Activated CD4-positive, alpha-beta memory T cell treated with anti-CD3 and anti-CD28 coated beads for 36 hours (primary cell): ENCODE measurements at regions of chr22 and their contacts with region 1.

Region 1: GRCh38 chr22:30245985-30246901 is at the start of gene LIF:
- DNase-seq: peak; percentile 69
- H3K4me3 Mint-ChIP-seq: peak within 1 kb of the TSS; percentile 90
- H3K27ac Mint-ChIP-seq: peak within 1 kb of the TSS; percentile 94
- H3K4me1 Mint-ChIP-seq: peaks cover 73% of the 10 kb centered on the region
- H3K27me3 Mint-ChIP-seq: no peaks in the 10 kb centered on the region
- total RNA-seq, gene LIF: 176 to 189 TPM

Region 2: DNA sequence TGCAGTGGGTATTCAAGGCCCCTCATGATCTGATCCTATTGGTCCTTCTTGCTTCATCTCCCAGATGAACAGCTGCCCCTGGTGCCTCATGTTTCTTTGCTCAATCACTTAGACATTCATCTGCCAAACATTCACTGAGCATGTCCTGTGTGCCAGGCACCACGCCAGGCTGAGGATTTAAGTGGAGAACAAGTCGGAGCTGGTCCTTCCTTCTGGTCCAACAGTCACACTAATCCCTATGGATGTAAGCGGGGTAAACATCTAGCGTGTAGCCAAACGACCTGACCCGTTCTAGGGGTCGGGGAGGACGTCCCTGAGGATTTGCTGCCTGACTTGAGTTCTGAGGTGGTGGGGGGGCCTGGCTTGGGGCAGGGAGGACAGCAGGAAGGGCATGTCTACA is 501.3 kb before region 1 on chr22:
- CTCF ChIA-PET with region 1: no interaction called
- POLR2A ChIA-PET with region 1: no interaction called
- intact Hi-C with region 1: no loop called
- DNase-seq: no peak
- H3K4me3 Mint-ChIP-seq: no peak overlapping the region
- H3K27ac Mint-ChIP-seq: no peak overlapping the region
- H3K4me1 Mint-ChIP-seq: no peaks in the 10 kb centered on the region
- H3K27me3 Mint-ChIP-seq: no peaks in the 10 kb centered on the region

Region 3: GRCh38 chr22:30089655-30089974 is 156.6 kb before region 1 on chr22:
- CTCF ChIA-PET with region 1: no interaction called
- POLR2A ChIA-PET with region 1: no interaction called
- intact Hi-C with region 1: no loop called
- DNase-seq: no peak
- H3K4me3 Mint-ChIP-seq: no peak overlapping the region
- H3K27ac Mint-ChIP-seq: no peak overlapping the region
- H3K4me1 Mint-ChIP-seq: peaks cover 7% of the 10 kb centered on the region
- H3K27me3 Mint-ChIP-seq: no peaks in the 10 kb centered on the region

Region 4: GRCh38 chr22:30169002-30169401 is 77.2 kb before region 1 on chr22:
- CTCF ChIA-PET with region 1: no interaction called
- POLR2A ChIA-PET with region 1: interaction called, 3 read pairs
- intact Hi-C with region 1: loop called (anchors 1 kb)
- DNase-seq: no peak
- H3K4me3 Mint-ChIP-seq: no peak overlapping the region
- H3K27ac Mint-ChIP-seq: no peak overlapping the region
- H3K4me1 Mint-ChIP-seq: peaks cover 9% of the 10 kb centered on the region
- H3K27me3 Mint-ChIP-seq: peaks cover 2% of the 10 kb centered on the region

Region 5: GRCh38 chr22:30178181-30179126 is 67.8 kb before region 1 on chr22:
- CTCF ChIA-PET with region 1: interaction called, 10 read pairs
- POLR2A ChIA-PET with region 1: interaction called, 6 read pairs
- intact Hi-C with region 1: no loop called
- DNase-seq: peak; percentile 73
- H3K4me3 Mint-ChIP-seq: no peak overlapping the region
- H3K27ac Mint-ChIP-seq: peak overlapping the region; percentile 94
- H3K4me1 Mint-ChIP-seq: peaks cover 69% of the 10 kb centered on the region
- H3K27me3 Mint-ChIP-seq: no peaks in the 10 kb centered on the region

Region 6: DNA sequence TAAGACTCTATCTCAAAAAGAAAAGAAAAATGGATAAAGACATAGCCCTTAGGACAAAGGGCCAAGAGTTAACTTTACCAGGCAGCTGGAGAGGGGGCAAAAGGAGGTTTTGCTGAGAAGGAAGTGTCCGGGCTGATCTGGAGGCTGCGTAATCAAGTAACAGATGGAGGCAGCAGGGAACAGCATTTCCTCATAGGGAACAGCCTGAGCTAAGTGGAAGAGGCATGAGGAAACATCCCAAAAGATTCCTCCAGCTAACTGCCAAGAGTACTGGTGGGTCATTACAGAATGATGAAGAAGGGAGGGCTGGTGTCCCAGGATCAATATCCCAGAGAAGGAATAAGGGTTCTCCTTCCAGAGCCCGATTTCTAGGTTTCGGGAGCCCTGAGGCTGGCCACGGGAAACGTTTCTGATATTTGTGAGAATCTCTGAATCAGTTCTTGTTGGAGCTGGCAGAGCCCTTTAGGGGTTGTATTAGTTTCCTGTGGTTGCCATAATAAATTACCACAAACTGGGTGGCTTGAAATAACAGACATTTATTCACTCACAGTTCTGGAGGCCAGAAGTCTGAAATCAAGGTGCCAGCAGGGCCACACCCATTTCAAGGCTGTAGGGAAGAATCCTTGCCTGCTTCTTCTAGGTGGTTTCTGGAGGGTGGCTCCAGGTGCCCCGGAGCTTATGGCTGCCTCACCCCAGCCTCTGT is 20.9 kb before region 1 on chr22:
- CTCF ChIA-PET with region 1: no interaction called
- POLR2A ChIA-PET with region 1: no interaction called
- intact Hi-C with region 1: no loop called
- DNase-seq: no peak
- H3K4me3 Mint-ChIP-seq: no peak overlapping the region
- H3K27ac Mint-ChIP-seq: no peak overlapping the region
- H3K4me1 Mint-ChIP-seq: peaks cover 58% of the 10 kb centered on the region
- H3K27me3 Mint-ChIP-seq: no peaks in the 10 kb centered on the region

Region 7: DNA sequence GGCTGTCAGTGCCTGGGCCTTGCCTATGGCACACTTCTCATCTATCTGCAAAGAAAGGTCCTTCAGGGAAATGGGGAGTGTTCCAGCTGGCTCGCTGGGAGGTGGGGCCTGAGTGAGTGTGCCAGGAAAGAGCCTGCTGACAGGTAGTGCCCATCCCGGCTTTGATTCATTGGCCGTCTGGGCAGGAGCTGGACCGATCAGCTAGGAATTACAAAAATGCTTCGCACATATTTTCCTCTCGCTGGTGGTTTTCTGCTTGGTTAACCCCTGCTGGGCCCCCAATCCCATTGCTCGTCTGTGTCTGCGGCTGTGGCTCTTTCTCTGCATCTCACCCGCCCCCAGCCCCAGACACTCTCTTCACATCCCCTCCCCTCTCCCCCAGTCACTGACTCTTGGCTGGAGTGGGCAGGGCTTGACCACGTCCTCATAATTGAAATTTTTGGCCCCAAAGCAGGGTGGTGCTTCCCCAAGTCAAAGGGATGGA is 10.5 kb before region 1 on chr22:
- CTCF ChIA-PET with region 1: no interaction called
- POLR2A ChIA-PET with region 1: no interaction called
- intact Hi-C with region 1: no loop called
- DNase-seq: no peak
- H3K4me3 Mint-ChIP-seq: no peak overlapping the region
- H3K27ac Mint-ChIP-seq: no peak overlapping the region
- H3K4me1 Mint-ChIP-seq: peaks cover 5% of the 10 kb centered on the region
- H3K27me3 Mint-ChIP-seq: no peaks in the 10 kb centered on the region

Region 8: DNA sequence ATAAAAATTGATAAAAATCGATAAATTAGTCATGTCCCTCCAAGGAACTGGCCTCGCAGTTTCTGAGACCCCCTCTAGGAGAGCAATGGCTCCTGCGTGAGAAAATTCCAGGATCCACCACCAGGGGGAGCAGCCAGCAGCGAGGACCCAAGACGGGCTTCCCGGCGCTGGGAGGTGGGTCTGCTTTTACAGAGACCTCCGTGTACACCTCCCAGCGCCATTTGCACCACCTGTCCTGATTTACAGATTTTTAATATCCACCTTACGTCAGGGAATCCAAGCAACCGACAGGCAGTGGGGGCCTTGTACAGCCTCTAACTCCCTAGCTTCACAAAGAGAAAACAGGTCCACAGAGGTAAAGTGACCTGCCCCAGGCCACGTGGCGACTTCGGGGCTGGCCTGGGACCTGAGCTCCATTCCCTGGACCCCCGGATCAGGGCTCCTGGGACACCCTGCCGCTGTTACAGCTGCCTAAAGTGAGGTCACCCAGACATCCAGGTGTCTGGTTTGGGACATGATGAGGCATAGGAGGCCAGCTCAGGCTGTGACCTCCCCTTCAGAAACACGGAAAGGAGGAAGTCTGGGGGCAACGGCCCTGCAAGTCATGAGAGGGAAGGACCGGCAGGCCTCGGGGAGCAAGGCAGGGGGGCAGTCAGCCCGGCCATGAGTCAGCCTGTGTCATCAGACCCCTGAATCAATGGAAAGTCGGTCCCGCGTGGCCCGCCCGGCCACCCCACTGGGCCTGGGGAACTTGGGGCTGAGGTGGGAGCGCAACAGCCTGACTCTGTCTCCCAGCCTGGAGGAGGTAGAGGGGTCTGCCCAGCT is 16.9 kb after region 1 on chr22:
- CTCF ChIA-PET with region 1: interaction called, 11 read pairs
- POLR2A ChIA-PET with region 1: interaction called, 3 read pairs
- intact Hi-C with region 1: loop called (anchors 1 kb)
- DNase-seq: peak; percentile 86
- H3K4me3 Mint-ChIP-seq: peak overlapping the region; percentile 71
- H3K27ac Mint-ChIP-seq: peak overlapping the region; percentile 69
- H3K4me1 Mint-ChIP-seq: peaks cover 34% of the 10 kb centered on the region
- H3K27me3 Mint-ChIP-seq: no peaks in the 10 kb centered on the region